ENCODE measurements at regions of chr1 and their contacts with region 1.

Region 1: GRCh38 chr1:54464482-54465146 is 58.4 kb upstream of the SSBP3 start:
- DNase-seq: no peak
- ATAC-seq: no peak; the same call in 1 of the 2 replicates
- H3K4me3 ChIP-seq: no peak overlapping the region
- H3K27ac ChIP-seq: no peak overlapping the region
- H3K4me1 ChIP-seq: peaks cover 3% of the 10 kb centered on the region; the same call in 1 of the 2 replicates
- H3K27me3 ChIP-seq: no peaks in the 10 kb centered on the region
- CTCF ChIP-seq: no peak

Region 2: GRCh38 chr1:54397090-54397591 is 67.5 kb before region 1 on chr1:
- CTCF ChIA-PET with region 1: no interaction called
- POLR2A ChIA-PET with region 1: no interaction called
- in situ Hi-C with region 1: no loop called
- intact Hi-C with region 1: no loop called
- DNase-seq: no peak
- ATAC-seq: peak; percentile 80
- H3K4me3 ChIP-seq: no peak overlapping the region
- H3K27ac ChIP-seq: peak overlapping the region; percentile 60; the same call in 1 of the 2 replicates
- H3K4me1 ChIP-seq: peaks cover 11% of the 10 kb centered on the region; the same call in 1 of the 2 replicates
- H3K27me3 ChIP-seq: no peaks in the 10 kb centered on the region
- CTCF ChIP-seq: no peak

Region 3: GRCh38 chr1:54823670-54824069 is 359.1 kb after region 1 on chr1:
- CTCF ChIA-PET with region 1: no interaction called
- POLR2A ChIA-PET with region 1: interaction called, 11 read pairs
- in situ Hi-C with region 1: no loop called
- intact Hi-C with region 1: no loop called
- DNase-seq: no peak
- ATAC-seq: no peak
- H3K4me3 ChIP-seq: no peak overlapping the region
- H3K27ac ChIP-seq: no peak overlapping the region
- H3K4me1 ChIP-seq: no peaks in the 10 kb centered on the region
- H3K27me3 ChIP-seq: no peaks in the 10 kb centered on the region
- CTCF ChIP-seq: no peak

Region 4: DNA sequence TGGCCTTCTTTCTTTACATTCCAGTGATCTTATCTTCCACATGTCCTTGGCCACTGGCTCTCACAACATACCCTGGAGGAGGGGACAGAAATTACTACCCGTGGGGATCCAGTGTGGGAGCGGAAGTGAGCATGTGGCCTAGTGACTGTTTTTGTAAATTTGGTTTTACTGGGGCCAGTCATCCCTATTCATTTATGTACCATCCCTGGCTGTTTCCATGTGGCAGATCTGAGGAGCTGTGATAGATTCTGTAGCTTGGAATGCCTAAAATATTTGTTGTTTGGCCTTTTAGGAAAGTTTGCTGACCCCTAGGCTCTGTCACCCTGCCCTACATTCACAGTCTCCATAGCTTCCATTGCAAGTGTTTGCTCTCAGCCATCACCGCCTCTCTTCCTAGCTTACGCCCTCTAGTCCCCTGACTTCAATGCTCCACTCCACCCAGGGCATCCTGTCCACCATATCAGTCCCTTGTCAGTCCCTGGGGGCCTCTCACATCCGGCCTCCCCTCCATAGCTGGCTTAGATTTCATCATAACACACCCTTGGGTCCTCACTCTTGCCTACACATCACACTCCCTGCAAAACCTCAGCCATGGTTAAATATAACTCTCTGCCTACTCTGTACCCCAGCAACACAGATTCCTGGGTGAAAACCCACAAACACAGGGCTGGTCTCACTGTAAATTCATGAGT is 396.6 kb after region 1 on chr1:
- CTCF ChIA-PET with region 1: no interaction called
- POLR2A ChIA-PET with region 1: interaction called, 10 read pairs
- in situ Hi-C with region 1: no loop called
- intact Hi-C with region 1: no loop called
- DNase-seq: no peak
- ATAC-seq: no peak
- H3K4me3 ChIP-seq: no peak overlapping the region
- H3K27ac ChIP-seq: no peak overlapping the region
- H3K4me1 ChIP-seq: no peaks in the 10 kb centered on the region
- H3K27me3 ChIP-seq: no peaks in the 10 kb centered on the region
- CTCF ChIP-seq: no peak

Measured in Panc1 (cell line).